Pancreas (tissue), 10 donors: ENCODE measurements at regions of chr5 and their contacts with region 1.

Region 1: DNA sequence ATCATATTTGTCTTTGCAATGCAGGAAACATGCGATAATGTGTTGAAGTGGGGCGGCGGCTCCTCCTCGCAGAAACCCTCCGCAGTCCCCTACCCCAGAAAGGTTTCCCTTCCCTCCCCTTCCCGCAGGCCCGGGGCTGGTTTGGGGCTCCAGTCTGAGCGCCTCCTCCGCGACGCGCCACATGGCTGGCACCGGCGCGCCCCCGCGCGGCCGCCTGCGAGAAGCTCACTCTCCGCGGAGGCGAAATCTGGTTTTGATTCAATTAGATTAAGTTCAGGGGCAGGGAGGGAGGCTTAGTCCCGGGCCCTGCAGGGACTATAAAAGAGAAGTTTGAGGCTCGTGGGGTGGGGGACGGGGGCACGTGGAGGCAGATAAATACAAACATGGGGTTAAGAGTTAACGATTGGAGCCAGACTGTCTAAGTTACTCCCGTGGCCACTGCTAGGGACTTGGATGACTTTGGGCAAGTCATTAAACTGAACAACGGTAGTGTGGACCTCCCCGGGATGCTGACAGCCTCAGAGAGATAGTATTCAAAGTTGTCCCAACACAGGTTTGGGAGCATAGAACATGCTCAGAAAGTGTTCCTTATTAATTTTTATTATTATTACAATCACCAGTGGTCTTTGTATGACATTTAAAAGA is 69.4 kb downstream of the MSX2 start:
- DNase-seq: peak; percentile 18 to 87 (median 59)
- ATAC-seq: peak; percentile 74 to 93 (median 88)
- H3K4me3 ChIP-seq: no peak overlapping the region
- H3K27ac ChIP-seq: no peak overlapping the region
- H3K4me1 ChIP-seq: no peaks in the 10 kb centered on the region
- H3K27me3 ChIP-seq: peaks cover 0 to 10% (median 0%) of the 10 kb centered on the region in 4 donors
- CTCF ChIP-seq: peak; percentile 66 to 80 (median 74)

Region 2: GRCh38 chr5:174424219-174425053 is 369.4 kb before region 1 on chr5:
- intact Hi-C with region 1: loop called in 2 of 3 experiments (anchors 5 to 10 kb)
- DNase-seq: no peak
- ATAC-seq: peak in 2 of 4 donors; percentile 31 to 50
- H3K4me3 ChIP-seq: no peak overlapping the region
- H3K27ac ChIP-seq: no peak overlapping the region
- H3K4me1 ChIP-seq: no peaks in the 10 kb centered on the region
- H3K27me3 ChIP-seq: no peaks in the 10 kb centered on the region
- CTCF ChIP-seq: no peak